ENCODE measurements at regions of chr21 and their contacts with region 1.

Region 1: DNA sequence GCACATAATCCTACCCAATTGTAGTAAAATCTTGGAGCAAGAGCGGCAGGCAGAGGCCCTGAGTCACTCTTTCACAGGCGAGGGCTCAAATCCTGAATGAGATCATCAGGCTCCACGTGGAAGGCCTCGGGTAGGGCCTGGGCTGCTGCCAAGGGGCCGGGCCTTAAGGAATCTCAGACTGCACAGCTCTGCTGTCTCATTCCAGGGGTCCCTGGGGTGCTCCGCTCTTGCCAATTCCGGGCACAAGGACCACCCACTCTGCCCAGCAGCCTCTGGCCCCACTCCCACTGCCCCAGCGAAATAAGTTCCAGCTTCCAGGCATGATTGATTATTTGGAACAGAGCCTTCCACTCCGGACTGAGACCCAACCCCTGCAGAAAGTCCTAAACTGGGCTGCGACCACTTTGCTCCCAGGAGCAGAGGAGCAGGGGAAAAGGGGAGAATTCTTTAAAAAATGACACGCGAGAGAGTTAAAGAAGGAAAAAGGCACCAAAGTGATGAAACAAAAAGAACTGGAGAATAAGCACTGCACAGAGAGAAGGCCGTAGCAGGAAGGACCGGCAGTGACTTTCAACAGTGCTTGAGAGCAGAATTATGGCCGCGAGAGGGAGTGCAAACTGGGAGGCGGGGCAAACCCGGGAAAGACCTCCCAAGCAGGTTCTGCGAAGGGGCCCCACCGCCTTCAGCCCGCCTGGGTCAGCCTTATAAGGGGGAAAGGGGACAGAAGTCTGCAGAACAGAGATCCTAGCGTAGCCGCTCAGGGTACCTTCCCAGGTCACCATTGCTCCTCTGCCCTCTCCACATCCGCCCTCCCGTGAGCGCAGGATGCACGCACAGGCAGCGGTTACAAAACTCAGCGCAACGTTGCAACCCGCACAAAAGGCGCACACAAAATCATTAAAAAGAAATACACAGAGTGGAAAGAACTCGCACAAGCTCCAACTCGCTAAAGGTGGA is 2.0 kb downstream of the ADAMTS1 start:
- DNase-seq: peak; percentile 93
- ATAC-seq: peak; percentile 56

Region 2: DNA sequence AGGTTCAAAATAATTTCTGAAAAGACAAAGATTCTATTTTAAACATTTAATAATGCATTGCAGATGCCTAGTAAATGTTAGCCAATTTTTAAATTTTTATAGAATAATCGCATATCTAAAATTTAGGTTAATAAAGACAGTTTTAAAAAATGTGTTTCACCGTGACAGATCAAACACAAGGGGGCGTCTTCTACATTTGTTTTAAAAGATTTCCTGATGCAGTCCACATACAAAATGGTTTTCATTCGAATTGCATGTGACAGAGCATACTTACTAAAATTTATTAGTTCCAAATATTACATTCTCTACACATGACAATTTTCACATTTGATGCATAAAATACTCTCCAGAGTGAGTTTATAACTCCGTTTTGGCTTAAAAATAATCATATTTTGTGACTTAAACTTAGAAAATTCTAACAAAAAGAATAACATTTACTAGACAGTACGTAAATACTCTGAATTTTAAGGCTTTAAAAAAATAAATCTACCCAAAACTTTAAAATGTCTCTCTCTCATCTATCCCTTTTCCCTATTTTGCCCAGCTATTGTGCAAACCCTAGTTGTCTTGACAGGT is 73.6 kb before region 1 on chr21:
- intact Hi-C with region 1: loop called (anchors 2 kb)
- DNase-seq: no peak
- ATAC-seq: no peak

Region 3: GRCh38 chr21:26783466-26784195 is 59.6 kb before region 1 on chr21:
- intact Hi-C with region 1: loop called (anchors 5 kb)
- DNase-seq: no peak
- ATAC-seq: no peak

Region 4: GRCh38 chr21:27564684-27565301 is 721.5 kb after region 1 on chr21:
- intact Hi-C with region 1: loop called (anchors 5 kb)
- DNase-seq: no peak
- ATAC-seq: peak; percentile 70

Region 5: GRCh38 chr21:28522014-28522799 is 1679.0 kb after region 1 on chr21:
- intact Hi-C with region 1: loop called (anchors 5 kb)
- DNase-seq: no peak
- ATAC-seq: peak; percentile 13

Measured in Right ventricle myocardium inferior (tissue), 1 donor.